BJ (cell line): ENCODE measurements at regions of chr22 and their contacts with region 1.

Region 1: DNA sequence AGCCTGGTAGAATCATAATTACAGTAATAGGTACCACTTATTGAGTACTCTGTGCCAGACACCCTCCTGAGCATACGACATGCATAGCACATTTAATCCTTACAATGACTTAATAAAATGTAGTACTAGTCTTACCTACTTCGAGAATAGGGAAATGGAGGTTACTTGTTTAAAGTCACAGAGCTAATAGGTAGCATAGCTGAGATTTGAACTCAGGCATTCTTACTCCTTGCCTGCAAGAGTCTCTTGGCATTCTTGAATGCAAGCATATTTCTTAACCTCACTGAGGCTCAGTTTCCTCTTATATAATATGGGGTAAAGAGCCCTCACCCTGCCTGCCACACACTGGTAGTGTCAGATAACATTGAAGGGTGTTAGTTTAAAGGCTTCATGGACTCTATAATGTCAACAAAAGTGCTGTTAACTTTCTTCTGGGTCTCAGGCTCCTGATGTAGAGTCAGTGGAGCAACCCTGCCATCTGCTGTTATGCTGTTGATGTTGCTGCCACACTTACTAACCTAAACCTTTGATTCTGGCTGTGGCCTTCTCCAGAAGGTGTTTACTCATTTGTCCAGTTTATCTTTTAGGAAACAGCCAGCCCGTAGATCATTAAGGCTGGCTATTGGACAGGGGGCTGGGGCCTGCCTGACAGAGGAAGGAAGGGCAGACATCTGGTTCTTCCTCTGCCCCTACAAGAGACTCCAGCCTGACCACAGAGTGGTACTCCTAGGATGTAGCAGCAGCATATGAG is 18.9 kb downstream of the LIMK2 start:
- DNase-seq: no peak
- H3K4me3 ChIP-seq: no peak overlapping the region
- H3K27me3 ChIP-seq: no peaks in the 10 kb centered on the region
- CTCF ChIP-seq: peak; percentile 81

Region 2: GRCh38 chr22:31107178-31107893 is 123.7 kb before region 1 on chr22 and contains the start of gene SELENOM:
- CTCF ChIA-PET with region 1: interaction called, 29 read pairs
- POLR2A ChIA-PET with region 1: no interaction called
- DNase-seq: peak; percentile 89
- H3K4me3 ChIP-seq: peak within 1 kb of the TSS; percentile 85
- H3K27me3 ChIP-seq: no peaks in the 10 kb centered on the region
- CTCF ChIP-seq: peak; percentile 99
- polyA plus RNA-seq, gene SELENOM: 215 and 292 TPM in 2 replicates

Region 3: DNA sequence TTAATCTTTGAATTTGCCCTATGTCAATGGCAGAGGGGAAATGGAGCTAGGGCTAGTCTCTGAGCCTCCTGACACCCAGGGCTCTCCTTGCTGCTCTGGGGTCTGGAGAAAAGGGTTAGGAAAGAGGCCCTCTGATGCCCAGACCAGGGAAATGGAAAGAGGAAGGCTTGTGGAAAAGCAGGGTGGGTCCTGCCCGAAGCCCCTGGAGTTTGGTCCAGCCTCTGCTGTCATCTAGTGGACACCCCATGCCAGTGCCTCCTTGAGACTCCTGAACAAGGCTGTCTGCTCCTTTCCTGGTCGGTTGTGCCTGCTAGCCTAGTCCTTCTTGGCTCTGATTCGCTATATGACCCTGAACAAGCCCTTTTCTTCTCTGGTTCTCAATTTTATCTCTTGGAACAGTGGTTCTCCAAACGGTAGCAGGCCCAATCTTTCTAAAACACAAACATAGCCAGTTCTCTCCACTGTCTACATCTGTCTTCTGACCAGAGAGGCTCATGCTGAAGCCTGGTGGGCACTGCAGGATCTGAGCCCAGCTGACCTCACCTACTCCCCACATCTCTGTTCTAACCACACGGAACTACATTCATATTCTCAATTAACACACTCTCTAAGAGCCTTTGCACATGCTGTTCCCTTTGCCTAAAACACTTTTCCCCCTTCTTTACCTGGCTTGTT is 82.0 kb before region 1 on chr22:
- CTCF ChIA-PET with region 1: interaction called, 18 read pairs
- POLR2A ChIA-PET with region 1: no interaction called
- DNase-seq: no peak
- H3K4me3 ChIP-seq: no peak overlapping the region
- H3K27me3 ChIP-seq: no peaks in the 10 kb centered on the region; the same call in 1 of the 2 replicates
- CTCF ChIP-seq: peak; percentile 99

Region 4: GRCh38 chr22:31211862-31212730 is 18.9 kb before region 1 on chr22 and contains the start of gene LIMK2:
- CTCF ChIA-PET with region 1: interaction called, 24 read pairs
- POLR2A ChIA-PET with region 1: no interaction called
- DNase-seq: peak; percentile 21
- H3K4me3 ChIP-seq: peak within 1 kb of the TSS; percentile 91
- H3K27me3 ChIP-seq: no peaks in the 10 kb centered on the region
- CTCF ChIP-seq: peak; percentile 83
- polyA plus RNA-seq, gene LIMK2: 5.2 and 5.5 TPM in 2 replicates

Region 5: DNA sequence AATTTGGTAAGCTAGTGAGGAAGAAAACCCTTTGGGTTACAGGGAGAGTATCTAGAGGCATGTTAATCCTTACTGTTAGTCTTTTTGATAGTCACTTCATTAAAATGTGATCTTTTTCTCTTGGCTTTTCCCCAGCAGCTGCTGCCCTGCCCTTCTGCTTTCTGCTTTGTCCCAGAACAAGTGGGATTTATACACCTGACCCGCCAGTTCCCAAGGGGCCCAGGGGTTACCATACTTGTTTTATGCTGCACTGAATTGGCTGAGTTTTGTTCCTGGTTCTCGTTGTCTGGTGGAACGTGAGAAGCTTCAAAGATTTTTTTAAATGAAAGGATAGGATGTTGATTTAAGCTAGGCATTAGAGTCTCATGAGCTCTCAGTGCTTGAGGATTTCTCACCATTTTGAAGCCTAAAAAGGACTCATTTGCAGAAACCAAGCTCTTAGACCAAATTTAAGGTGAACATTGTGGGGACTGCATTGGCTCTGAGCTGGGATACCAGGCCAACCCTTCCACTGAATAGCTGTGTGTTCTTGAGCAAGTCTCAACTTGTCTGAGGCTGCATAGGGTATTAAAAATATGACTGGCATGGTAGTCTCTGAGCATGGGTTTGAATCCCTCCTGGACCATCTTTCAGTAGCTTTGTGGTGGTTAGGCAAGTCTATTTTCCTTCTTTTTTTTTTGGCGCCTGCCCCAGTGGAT is 12.3 kb before region 1 on chr22:
- CTCF ChIA-PET with region 1: interaction called, 16 read pairs
- POLR2A ChIA-PET with region 1: no interaction called
- DNase-seq: no peak
- H3K4me3 ChIP-seq: no peak overlapping the region
- H3K27me3 ChIP-seq: no peaks in the 10 kb centered on the region
- CTCF ChIP-seq: no peak

Region 6: DNA sequence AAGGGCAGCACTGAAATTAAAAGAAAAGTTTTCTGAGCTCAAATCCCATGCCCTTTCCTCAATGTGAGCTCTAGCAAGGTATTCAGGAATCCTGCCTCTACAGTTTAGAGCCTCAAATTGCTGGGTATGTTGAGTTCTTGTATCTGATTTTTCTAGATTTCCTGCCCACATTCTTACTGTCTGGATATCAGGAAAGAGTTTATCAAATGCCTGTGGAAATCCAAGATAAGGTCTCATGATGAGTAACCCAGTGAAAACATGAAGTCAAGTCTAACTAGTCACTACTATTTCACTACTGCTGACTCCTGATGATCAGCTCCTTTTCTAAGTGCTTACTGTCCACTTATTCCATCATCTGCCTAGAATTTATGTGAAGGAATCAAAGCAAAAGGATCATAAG is 10.9 kb after region 1 on chr22:
- CTCF ChIA-PET with region 1: interaction called, 18 read pairs
- POLR2A ChIA-PET with region 1: no interaction called
- DNase-seq: no peak
- H3K4me3 ChIP-seq: no peak overlapping the region
- H3K27me3 ChIP-seq: no peaks in the 10 kb centered on the region
- CTCF ChIP-seq: peak; percentile 32; the same call in 1 of the 2 replicates

Region 7: DNA sequence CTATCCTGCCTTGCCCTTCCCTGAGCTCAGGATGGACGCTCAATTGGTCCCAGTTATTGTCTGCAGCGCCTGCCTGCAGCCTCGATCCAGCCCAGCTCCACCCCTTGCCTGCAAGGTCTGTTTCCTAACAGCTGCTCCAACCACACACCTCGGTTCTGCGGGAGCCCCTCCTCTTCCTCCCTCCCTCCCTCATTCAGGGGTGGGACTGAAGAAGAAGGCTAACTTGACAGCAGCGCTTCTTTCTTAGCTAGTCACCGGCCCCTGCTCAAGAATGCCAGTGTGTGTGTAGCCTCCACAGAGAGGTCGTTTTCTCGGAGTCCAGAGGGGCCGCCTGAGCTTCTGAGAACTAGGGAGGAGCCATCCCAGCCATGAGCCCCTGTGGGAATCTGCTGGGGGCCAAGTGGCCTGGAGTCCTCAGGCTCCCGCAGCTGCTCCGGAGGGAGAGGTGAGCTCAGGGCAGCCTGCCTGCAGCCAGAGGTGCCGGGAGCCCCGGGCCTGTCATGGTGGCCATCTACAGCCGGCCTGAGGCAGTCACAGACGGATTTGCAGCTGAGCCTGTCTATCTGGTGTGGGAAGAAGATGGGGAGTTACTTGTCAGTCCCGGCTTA is 17.2 kb after region 1 on chr22:
- CTCF ChIA-PET with region 1: interaction called, 18 read pairs
- POLR2A ChIA-PET with region 1: no interaction called
- DNase-seq: peak; percentile 75
- H3K4me3 ChIP-seq: peak overlapping the region; percentile 46
- H3K27me3 ChIP-seq: no peaks in the 10 kb centered on the region
- CTCF ChIP-seq: no peak

Region 8: DNA sequence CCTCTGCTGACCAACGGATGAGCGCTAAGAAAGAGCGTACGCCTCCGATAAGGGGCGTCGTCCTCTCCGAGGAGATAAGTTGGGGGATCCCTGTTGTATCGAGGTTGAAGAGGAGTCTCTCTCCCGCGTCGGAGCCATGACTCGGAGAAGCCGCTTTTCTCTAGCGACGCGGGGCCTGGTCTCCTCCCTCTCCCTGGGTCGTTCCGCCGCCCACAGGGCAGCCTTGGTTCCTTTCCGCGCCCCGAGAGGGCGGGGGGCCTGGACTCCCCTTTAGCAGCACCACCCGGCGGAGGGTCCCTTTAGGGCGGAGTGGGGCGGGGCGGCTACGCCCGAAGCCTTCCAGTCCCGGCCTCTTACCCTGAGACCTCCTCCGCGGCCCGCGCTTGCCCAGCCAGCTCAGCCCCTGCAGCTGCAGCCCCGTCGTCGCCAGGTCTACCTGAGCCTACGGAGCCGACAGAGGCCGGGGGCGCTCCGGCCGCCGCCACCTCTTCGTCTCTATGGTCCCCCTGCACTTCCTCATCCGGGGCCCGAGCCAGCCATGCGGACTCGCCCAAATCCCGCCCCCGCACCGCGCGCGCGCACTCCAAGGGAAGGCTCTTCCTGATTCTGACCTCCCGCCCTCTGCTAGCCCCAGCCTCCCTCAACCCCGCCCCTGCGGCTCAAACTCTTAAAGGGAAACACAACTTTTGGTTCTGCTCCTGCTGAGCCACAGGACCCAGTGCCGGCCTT is 518.8 kb after region 1 on chr22 and contains the start of gene PRR14L:
- CTCF ChIA-PET with region 1: no interaction called
- POLR2A ChIA-PET with region 1: no interaction called
- DNase-seq: peak; percentile 68
- H3K4me3 ChIP-seq: peak within 1 kb of the TSS; percentile 80
- H3K27me3 ChIP-seq: no peaks in the 10 kb centered on the region
- CTCF ChIP-seq: peak; percentile 8; the same call in 1 of the 2 replicates
- polyA plus RNA-seq, gene PRR14L: 8.0 and 9.6 TPM in 2 replicates